Activated T-helper 1 cell treated with anti-CD3 and anti-CD28 coated beads, Interleukin-12 subunit alpha, Interleukin-12 subunit beta, Interleukin-2, Interleukin-4 antibody, amounts not matched to agents 30 ng/mL and 10 ng/mL and 1 ng/mL, durations not matched to agents 14 hours and 24 hours and 36 hours (primary cell): ENCODE measurements at regions of chr7 and their contacts with region 1.

Region 1: DNA sequence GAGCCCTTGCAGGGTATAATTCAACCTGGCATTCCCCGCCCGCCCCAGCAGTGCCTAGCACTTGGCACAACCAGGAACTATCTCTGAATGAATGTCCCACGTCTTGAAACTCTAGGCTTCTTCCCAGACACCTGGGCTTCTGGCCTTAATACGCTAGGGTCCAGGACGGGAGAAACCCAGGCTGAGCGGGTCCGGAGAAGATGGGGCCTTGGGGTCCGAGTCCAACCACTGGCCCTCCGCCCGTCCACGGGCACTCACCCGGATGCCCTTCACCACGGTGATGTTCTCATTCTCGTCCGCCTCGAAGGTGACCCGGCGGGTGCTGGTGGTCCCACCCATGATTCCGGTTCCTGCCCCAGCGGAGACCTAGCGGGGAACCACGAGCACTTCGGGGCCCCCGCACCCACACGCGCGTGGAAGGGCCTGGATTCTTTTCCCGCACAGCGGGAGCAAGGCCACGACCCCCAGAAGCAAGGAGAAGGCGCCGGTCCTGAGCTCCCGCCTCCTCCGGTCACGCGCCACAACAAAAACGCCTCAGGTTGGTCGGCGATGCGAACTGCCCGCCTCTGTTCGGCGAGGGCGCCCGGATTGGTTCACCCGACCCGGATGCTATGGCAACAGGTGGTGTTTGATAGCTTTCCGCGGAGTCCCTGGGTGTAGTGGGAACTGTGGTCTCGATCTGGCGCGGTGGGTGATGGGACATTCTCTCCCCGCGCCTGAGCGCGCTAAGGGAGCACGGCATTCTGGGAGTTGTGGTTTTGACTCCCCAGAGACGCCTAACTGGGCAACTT is at the start of gene CHCHD3:
- DNase-seq: peak; percentile 95
- H3K4me3 Mint-ChIP-seq: peak within 1 kb of the TSS; percentile 93
- H3K27ac Mint-ChIP-seq: peak within 1 kb of the TSS; percentile 94
- H3K4me1 Mint-ChIP-seq: peaks cover 33% of the 10 kb centered on the region
- H3K27me3 Mint-ChIP-seq: no peaks in the 10 kb centered on the region
- total RNA-seq, gene CHCHD3: 69.9 and 76.8 TPM in 2 replicates

Region 2: GRCh38 chr7:132654150-132654549 is 427.6 kb before region 1 on chr7:
- intact Hi-C with region 1: loop called (anchors 2 kb)
- DNase-seq: no peak
- H3K4me3 Mint-ChIP-seq: peak overlapping the region; percentile 45
- H3K27ac Mint-ChIP-seq: peak overlapping the region; percentile 75
- H3K4me1 Mint-ChIP-seq: peaks cover 39% of the 10 kb centered on the region
- H3K27me3 Mint-ChIP-seq: peaks cover 4% of the 10 kb centered on the region

Region 3: DNA sequence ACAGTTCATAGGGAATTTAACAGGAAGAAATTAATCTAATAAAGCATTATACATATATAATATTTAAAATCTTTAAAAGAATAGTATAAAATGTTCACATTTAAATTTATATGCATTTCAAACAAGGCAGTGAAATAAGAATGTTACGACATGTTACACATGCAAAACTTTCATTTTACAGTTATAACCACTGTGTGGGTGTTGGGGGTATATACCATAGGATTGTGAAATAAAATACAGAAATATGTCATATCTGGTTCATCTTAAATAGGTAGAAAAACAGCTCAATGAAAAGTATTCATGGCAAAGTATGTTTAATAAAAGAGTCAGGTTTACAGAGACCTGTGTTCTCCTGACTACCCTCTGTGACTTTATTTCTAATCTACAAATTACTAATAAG is 45.5 kb before region 1 on chr7:
- intact Hi-C with region 1: loop called (anchors 5 kb)
- DNase-seq: no peak
- H3K4me3 Mint-ChIP-seq: no peak overlapping the region
- H3K27ac Mint-ChIP-seq: no peak overlapping the region
- H3K4me1 Mint-ChIP-seq: no peaks in the 10 kb centered on the region
- H3K27me3 Mint-ChIP-seq: no peaks in the 10 kb centered on the region

Region 4: GRCh38 chr7:133434055-133434865 is 352.5 kb after region 1 on chr7:
- intact Hi-C with region 1: loop called (anchors 5 kb)
- DNase-seq: no peak
- H3K4me3 Mint-ChIP-seq: no peak overlapping the region
- H3K27ac Mint-ChIP-seq: no peak overlapping the region
- H3K4me1 Mint-ChIP-seq: no peaks in the 10 kb centered on the region
- H3K27me3 Mint-ChIP-seq: no peaks in the 10 kb centered on the region